IMR-90 (cell line): ENCODE measurements at regions of chr1 and their contacts with region 1.

Region 1: DNA sequence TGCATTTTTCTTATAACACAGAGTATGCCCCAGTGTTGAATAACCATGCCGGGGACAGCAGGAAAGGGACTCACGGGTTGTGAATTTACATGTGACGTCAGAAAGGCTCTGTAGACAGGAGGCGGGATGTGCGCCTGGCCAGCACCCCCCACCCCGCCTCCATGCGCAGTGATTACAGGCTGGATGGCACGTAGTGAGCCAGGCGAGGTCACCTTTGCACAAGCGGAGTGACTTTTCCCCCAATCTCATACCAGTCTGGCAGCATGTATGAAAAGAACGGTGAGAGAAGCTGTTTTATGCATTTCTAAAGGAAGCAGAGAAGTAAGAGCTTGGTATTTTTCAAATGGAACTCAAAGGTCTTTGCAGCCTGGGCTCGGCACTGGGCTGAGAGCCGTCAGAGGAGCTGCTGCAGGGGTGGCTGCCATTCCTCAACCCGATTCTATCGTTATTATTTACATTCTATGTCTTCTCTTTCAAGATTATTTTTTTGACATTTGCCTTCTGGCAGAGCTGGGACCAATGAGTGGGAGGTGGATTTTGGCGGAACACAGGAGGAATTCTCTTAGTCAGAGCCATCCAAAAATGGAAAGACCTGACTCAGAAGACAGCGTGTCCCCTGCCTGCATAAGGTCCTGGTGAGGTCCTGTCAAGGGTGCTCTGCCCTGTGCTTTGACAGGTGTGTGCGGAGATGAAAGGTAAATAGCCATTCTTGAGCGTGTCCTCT is 115.6 kb upstream of the SLC45A1 start:
- DNase-seq: peak; percentile 97
- ATAC-seq: peak; percentile 77
- H3K4me3 ChIP-seq: peak overlapping the region; percentile 1; the same call in 1 of the 2 replicates
- H3K27ac ChIP-seq: peak overlapping the region; percentile 97
- H3K4me1 ChIP-seq: peaks cover 38% of the 10 kb centered on the region
- H3K27me3 ChIP-seq: no peaks in the 10 kb centered on the region
- CTCF ChIP-seq: no peak
- POLR2A ChIP-seq: no peak
- RAD21 ChIP-seq: peak; percentile 39

Region 2: DNA sequence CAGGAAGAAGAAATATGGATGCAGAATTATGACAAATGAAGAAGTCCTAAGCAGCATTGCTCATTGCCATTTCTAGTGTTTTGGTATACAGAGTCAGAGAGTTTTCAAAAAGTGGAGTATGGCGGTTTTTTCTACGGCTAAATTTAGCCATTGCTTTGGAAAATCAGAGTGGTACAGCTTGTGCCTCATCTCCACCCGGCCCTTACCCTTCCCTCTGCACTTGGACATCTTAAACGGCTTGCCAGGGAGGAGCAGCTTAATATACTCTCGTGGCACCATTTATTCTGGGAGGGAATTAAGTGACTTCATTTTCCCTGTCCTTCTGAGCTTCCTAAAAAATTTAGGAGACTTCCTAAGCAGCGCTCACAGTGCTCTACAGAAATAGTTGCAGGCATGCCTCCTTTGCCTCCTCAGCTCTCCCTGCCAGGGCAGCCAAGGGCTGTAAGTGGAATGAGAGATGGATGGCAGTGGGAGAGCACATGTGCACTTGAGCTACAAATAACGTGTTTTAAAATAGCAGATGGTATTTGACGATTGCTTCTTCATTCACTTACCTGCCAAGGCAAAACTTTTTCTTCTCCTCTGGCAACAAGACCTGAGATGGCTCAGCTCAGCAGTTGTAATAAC is 482.8 kb before region 1 on chr1:
- CTCF ChIA-PET with region 1: no interaction called
- POLR2A ChIA-PET with region 1: no interaction called
- dilution Hi-C with region 1: no loop called
- in situ Hi-C with region 1: no loop called
- intact Hi-C with region 1: no loop called
- DNase-seq: no peak
- ATAC-seq: no peak
- H3K4me3 ChIP-seq: no peak overlapping the region
- H3K27ac ChIP-seq: no peak overlapping the region
- H3K4me1 ChIP-seq: no peaks in the 10 kb centered on the region
- H3K27me3 ChIP-seq: peaks cover 50% of the 10 kb centered on the region
- CTCF ChIP-seq: no peak
- POLR2A ChIP-seq: no peak
- RAD21 ChIP-seq: no peak

Region 3: DNA sequence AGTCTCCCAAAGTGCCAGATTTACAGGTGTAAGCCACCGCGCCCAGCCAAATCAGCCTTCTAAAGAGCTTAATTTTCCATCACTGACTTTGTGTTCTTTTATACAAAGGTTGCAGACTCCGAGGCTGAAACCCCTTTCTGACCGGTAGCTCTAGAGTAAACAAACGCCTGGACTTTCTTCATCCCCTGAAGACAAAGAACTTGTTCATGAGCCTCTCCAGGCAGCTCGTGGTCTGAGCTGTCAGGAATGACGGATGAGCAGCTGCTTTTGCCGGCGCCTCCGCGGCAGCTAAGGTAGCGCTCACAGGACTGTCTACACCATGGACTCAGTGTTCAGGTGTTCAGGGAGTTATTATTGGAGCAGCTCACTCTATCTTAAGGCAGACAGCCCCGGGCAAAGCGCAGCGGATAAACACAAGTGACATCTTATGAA is 47.7 kb before region 1 on chr1:
- CTCF ChIA-PET with region 1: no interaction called
- POLR2A ChIA-PET with region 1: no interaction called
- dilution Hi-C with region 1: no loop called
- in situ Hi-C with region 1: no loop called
- intact Hi-C with region 1: no loop called
- DNase-seq: peak; percentile 74
- ATAC-seq: peak; percentile 71
- H3K4me3 ChIP-seq: no peak overlapping the region
- H3K27ac ChIP-seq: 0 out of 2 replicates have a peak overlapping the region, but pooled peaks have one; percentile 6
- H3K4me1 ChIP-seq: peaks cover 3% of the 10 kb centered on the region
- H3K27me3 ChIP-seq: no peaks in the 10 kb centered on the region
- CTCF ChIP-seq: no peak
- POLR2A ChIP-seq: no peak
- RAD21 ChIP-seq: no peak

Region 4: GRCh38 chr1:8238851-8239305 is 36.5 kb after region 1 on chr1:
- CTCF ChIA-PET with region 1: no interaction called
- POLR2A ChIA-PET with region 1: no interaction called
- dilution Hi-C with region 1: no loop called
- in situ Hi-C with region 1: no loop called
- intact Hi-C with region 1: loop called (anchors 1 kb)
- DNase-seq: peak; percentile 58
- ATAC-seq: peak; percentile 19
- H3K4me3 ChIP-seq: no peak overlapping the region
- H3K27ac ChIP-seq: peak overlapping the region; percentile 76
- H3K4me1 ChIP-seq: peaks cover 14% of the 10 kb centered on the region
- H3K27me3 ChIP-seq: no peaks in the 10 kb centered on the region
- CTCF ChIP-seq: peak; percentile 46
- POLR2A ChIP-seq: no peak
- RAD21 ChIP-seq: peak; percentile 46